ENCODE measurements at regions of chr11 and their contacts with region 1.

Region 1: DNA sequence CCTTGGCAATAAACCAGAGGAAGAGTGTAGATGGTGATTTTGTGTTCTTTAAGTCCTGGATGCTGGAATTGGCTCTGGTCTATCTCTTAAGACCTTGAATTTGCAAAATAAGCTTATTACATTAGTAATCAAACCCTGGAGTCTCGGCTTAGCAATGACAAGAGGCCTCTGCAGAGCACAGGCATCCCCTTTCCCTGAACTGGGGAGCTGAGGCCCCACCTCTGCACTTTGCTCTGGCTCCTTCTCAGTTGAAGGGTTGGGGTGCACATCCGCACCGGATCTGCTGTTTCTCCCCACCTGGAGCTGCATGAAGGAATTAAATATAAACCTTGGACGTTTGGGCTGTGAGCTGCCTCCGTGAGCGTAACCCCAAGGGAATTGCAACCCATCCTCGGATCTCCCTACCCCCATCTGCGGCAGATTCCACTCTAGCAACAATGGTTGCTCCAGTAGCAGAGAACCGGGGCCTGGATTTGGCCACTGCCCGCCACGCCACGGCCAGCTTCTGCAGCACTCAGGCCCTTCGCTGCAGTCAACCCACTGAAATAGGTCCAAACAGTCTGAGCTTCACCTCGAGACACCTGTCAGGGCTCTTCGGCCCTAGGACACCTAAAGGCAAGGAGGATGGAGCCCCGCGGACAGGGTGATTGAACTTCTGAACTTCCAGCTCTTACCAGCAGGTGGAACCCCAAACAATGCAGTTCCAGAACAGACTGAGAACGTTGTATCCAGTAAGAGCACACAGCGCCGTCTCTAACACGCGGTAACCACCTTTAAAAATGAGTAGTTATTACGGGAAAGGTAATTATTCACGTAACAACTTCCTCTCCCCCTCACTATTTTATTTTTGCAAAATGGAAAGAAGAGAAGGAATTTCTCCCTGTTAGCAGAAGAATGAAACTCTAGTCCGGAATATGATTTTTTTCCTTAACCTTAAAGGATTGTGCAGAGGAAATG is 54.8 kb upstream of the CAPRIN1 start:
- DNase-seq: peak; percentile 81 to 85
- H3K4me3 ChIP-seq: peak overlapping the region; percentile 22
- H3K4me3 Mint-ChIP-seq: peak overlapping the region; percentile 63
- H3K27ac Mint-ChIP-seq: no peak overlapping the region
- H3K4me1 ChIP-seq: no peaks in the 10 kb centered on the region; the same call in 1 of the 2 replicates
- H3K4me1 Mint-ChIP-seq: peaks cover 13% of the 10 kb centered on the region
- H3K27me3 ChIP-seq: no peaks in the 10 kb centered on the region
- H3K27me3 Mint-ChIP-seq: peaks cover 4% of the 10 kb centered on the region
- CTCF ChIP-seq: peak; percentile 86 to 90

Region 2: DNA sequence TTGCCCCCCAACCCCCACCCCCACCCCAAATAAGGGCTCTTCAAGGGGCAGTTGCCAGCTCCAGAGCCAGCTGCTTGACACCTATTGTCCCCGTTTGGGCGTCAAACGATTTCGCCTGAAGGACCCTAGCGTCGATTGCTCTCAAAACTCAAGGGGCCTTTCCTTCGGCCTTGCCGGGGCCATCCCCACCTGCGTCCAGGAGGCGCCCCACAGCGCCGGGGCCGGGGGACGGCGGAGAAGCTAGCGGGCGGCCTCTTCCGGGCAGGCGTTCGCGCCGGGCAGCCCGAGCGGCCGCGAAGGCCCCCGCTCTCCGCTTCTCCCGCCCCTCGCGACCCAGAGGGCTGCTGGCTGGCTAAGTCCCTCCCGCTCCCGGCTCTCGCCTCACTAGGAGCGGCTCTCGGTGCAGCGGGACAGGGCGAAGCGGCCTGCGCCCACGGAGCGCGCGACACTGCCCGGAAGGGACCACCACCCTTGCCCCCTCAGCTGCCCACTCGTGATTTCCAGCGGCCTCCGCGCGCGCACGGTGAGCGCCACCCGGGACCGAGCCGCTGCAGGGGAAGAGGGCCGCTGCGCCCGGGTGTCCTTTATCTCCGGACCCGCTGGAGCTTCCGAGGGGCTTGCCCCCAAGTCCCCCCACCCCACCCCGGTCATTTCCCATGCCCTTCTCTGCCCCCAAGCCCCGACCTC is 54.7 kb after region 1 on chr11 and contains the start of gene CAPRIN1:
- CTCF ChIA-PET with region 1: no interaction called
- POLR2A ChIA-PET with region 1: no interaction called
- intact Hi-C with region 1: loop called (anchors 1 kb)
- DNase-seq: peak; percentile 97 to 98
- H3K4me3 ChIP-seq: peak within 1 kb of the TSS; percentile 94
- H3K4me3 Mint-ChIP-seq: peak within 1 kb of the TSS; percentile 98
- H3K27ac Mint-ChIP-seq: peak within 1 kb of the TSS; percentile 97
- H3K4me1 ChIP-seq: peaks cover 19% of the 10 kb centered on the region
- H3K4me1 Mint-ChIP-seq: peaks cover 14% of the 10 kb centered on the region
- H3K27me3 ChIP-seq: no peaks in the 10 kb centered on the region
- H3K27me3 Mint-ChIP-seq: no peaks in the 10 kb centered on the region
- CTCF ChIP-seq: peak in 1 of 2 experiments; percentile 13
- total RNA-seq, gene CAPRIN1: 217 and 224 TPM in 2 replicates

Region 3: GRCh38 chr11:34072832-34073231 is 76.1 kb after region 1 on chr11:
- CTCF ChIA-PET with region 1: interaction called, 4 read pairs
- POLR2A ChIA-PET with region 1: interaction called, 16 read pairs
- intact Hi-C with region 1: loop called (anchors 5 kb)
- DNase-seq: no peak
- H3K4me3 ChIP-seq: no peak overlapping the region
- H3K4me3 Mint-ChIP-seq: no peak overlapping the region
- H3K27ac Mint-ChIP-seq: no peak overlapping the region
- H3K4me1 ChIP-seq: no peaks in the 10 kb centered on the region
- H3K4me1 Mint-ChIP-seq: no peaks in the 10 kb centered on the region
- H3K27me3 ChIP-seq: no peaks in the 10 kb centered on the region
- H3K27me3 Mint-ChIP-seq: no peaks in the 10 kb centered on the region
- CTCF ChIP-seq: no peak

Region 4: GRCh38 chr11:34105079-34105956 is 108.5 kb after region 1 on chr11 and contains the start of gene NAT10:
- CTCF ChIA-PET with region 1: interaction called, 7 read pairs
- POLR2A ChIA-PET with region 1: no interaction called
- intact Hi-C with region 1: loop called (anchors 1 kb)
- DNase-seq: peak; percentile 97 to 99
- H3K4me3 ChIP-seq: peak within 1 kb of the TSS; percentile 74
- H3K4me3 Mint-ChIP-seq: peak within 1 kb of the TSS; percentile 94
- H3K27ac Mint-ChIP-seq: peak within 1 kb of the TSS; percentile 95
- H3K4me1 ChIP-seq: peaks cover 9% of the 10 kb centered on the region
- H3K4me1 Mint-ChIP-seq: peaks cover 19% of the 10 kb centered on the region
- H3K27me3 ChIP-seq: no peaks in the 10 kb centered on the region
- H3K27me3 Mint-ChIP-seq: no peaks in the 10 kb centered on the region
- CTCF ChIP-seq: no peak
- total RNA-seq, gene NAT10: 91.4 and 101 TPM in 2 replicates

Region 5: GRCh38 chr11:34174412-34175041 is 177.8 kb after region 1 on chr11:
- CTCF ChIA-PET with region 1: no interaction called
- POLR2A ChIA-PET with region 1: no interaction called
- intact Hi-C with region 1: loop called (anchors 5 kb)
- DNase-seq: peak; percentile 71 to 88
- H3K4me3 ChIP-seq: peak overlapping the region; percentile 15; the same call in 1 of the 2 replicates
- H3K4me3 Mint-ChIP-seq: peak overlapping the region; percentile 75
- H3K27ac Mint-ChIP-seq: no peak overlapping the region
- H3K4me1 ChIP-seq: 0 out of 2 replicates have a peak, but pooled peaks cover 3% of the 10 kb centered on the region
- H3K4me1 Mint-ChIP-seq: no peaks in the 10 kb centered on the region
- H3K27me3 ChIP-seq: no peaks in the 10 kb centered on the region
- H3K27me3 Mint-ChIP-seq: no peaks in the 10 kb centered on the region
- CTCF ChIP-seq: peak; percentile 91 to 98